ENCODE measurements at regions of chr2 and their contacts with region 1.

Region 1: GRCh38 chr2:20446917-20447436 is at the start of gene RHOB:
- DNase-seq: peak; percentile 86
- H3K4me3 Mint-ChIP-seq: peak within 1 kb of the TSS; percentile 81
- H3K27ac Mint-ChIP-seq: peak within 1 kb of the TSS; percentile 68
- H3K4me1 Mint-ChIP-seq: peaks cover 9% of the 10 kb centered on the region
- H3K27me3 Mint-ChIP-seq: peaks cover 40% of the 10 kb centered on the region
- total RNA-seq, gene RHOB: 119 and 123 TPM in 2 replicates

Region 2: DNA sequence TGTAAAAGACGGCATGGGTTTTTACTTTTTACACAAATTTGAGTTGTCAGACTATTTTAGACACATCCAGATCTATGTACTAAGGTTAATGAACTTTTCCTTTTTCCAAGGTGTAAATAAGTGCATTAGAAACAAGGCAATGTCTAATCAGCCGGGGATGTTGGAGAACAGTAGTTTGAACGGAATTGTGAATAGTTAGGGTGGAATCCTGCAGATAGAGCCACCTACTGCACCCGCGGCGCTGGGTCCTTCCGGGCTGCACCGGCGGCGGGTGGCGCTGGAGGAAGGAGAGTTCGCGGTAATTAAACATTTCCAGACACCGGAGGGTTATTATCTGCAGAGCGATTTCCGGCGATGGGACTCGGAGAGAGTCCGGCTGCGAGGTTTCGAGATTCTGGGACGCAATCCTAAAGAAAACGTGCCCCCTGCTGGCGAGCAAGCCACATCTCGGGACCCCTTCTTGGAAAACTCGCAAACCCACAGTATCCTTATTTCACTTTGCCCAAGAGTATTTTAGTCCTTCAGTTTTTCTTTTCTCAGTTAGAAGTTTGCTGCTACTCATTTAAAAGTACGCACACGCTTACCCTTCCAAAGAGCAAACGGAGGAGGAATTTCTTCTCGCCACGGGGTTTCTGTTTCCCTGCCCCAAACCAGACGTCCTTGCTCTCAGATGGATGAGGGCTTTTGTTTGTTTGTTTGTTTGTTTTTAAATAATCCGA is 1084.1 kb before region 1 on chr2:
- intact Hi-C with region 1: loop called (anchors 5 kb)
- DNase-seq: no peak
- H3K4me3 Mint-ChIP-seq: peak overlapping the region; percentile 82
- H3K27ac Mint-ChIP-seq: no peak overlapping the region
- H3K4me1 Mint-ChIP-seq: peaks cover 25% of the 10 kb centered on the region
- H3K27me3 Mint-ChIP-seq: peaks cover 80% of the 10 kb centered on the region

Region 3: DNA sequence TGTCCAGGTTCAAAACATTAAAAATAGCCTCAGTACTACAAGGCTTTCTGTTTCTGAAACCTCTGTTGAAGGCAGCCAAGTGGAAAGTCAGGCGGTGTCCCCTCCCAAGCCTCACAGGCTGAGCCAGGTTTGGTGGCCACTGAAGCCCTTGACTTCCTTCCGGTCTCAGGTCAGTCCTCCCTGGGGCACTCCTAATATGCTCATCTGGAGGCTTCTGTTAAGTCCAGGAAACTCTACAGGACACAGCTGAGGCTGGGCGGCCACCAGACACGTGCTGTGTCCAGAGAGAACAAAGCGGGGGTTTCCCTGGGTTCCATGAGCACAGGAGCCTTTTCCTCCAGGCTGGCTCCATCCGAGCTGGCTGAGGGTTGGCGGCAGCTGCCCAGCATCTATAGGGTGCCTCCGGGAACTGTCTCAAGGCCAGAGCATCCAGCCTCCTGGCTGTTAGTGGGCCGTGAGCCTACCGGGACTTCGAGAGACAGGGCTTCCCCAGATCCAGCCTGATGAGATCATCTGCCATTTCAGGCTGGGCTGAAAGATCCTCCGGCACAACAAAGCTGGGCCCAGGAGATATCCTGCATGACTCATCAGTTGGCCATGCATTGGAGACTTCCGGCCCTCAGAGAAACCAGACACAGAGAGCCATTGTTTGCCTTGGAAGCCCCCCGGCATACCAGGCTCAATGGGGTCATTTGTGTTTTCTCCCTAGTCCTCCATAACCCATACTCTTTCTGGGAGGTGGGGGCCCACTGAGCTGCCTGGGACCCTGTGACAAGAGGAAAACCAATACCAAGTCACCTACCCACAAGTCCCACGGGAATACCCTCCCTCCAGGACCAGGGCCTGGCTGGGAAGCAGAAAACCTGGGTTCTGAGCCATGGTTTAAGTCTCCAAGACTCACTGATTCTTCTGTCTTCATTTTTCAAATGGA is 132.2 kb after region 1 on chr2:
- intact Hi-C with region 1: loop called (anchors 2 kb)
- DNase-seq: no peak
- H3K4me3 Mint-ChIP-seq: no peak overlapping the region
- H3K27ac Mint-ChIP-seq: peak overlapping the region; percentile 79
- H3K4me1 Mint-ChIP-seq: peaks cover 40% of the 10 kb centered on the region
- H3K27me3 Mint-ChIP-seq: no peaks in the 10 kb centered on the region

Region 4: GRCh38 chr2:20635675-20636584 is 189.0 kb after region 1 on chr2:
- intact Hi-C with region 1: loop called (anchors 2 kb)
- DNase-seq: peak; percentile 30
- H3K4me3 Mint-ChIP-seq: no peak overlapping the region
- H3K27ac Mint-ChIP-seq: no peak overlapping the region
- H3K4me1 Mint-ChIP-seq: peaks cover 1% of the 10 kb centered on the region
- H3K27me3 Mint-ChIP-seq: no peaks in the 10 kb centered on the region

Region 5: GRCh38 chr2:20650880-20651730 is 204.1 kb after region 1 on chr2 and contains the start of gene HS1BP3:
- intact Hi-C with region 1: loop called (anchors 1 kb)
- DNase-seq: peak; percentile 88
- H3K4me3 Mint-ChIP-seq: peak within 1 kb of the TSS; percentile 87
- H3K27ac Mint-ChIP-seq: peak within 1 kb of the TSS; percentile 85
- H3K4me1 Mint-ChIP-seq: peaks cover 15% of the 10 kb centered on the region
- H3K27me3 Mint-ChIP-seq: peaks cover 10% of the 10 kb centered on the region
- total RNA-seq, gene HS1BP3: 11.5 and 11.9 TPM in 2 replicates